ENCODE measurements at regions of chr11 and their contacts with region 1.

Region 1: DNA sequence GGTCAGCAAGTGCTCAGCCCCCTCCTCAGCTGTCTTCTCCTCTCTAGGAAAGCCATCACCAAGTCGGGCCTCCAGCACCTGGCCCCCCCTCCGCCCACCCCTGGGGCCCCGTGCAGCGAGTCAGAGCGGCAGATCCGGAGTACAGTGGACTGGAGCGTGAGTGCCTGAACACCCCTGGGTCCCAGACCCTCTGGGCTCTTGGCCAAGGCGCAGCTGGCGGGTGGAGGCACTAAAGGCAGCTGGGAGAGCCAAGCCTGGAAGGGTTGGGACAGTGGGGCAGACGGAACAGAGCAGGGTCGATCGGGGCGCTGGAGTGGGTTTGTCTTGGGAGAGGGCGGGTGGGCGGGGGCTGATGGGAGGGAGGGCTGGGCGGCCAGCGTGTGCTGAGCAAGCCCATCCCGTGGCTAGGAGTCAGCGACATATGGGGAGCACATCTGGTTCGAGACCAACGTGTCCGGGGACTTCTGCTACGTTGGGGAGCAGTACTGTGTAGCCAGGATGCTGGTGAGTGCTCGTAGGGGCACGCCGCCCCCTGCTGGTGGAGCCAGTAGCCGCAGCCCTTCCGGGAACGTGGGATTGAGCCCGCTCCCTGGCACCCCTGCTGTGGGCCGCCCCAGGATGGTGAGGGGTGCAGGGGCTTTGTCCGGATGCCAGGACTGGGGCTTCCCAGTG is 14.1 kb upstream of the MDK start:
- DNase-seq: no peak
- H3K4me3 ChIP-seq: no peak overlapping the region
- H3K27ac ChIP-seq: no peak overlapping the region
- H3K27me3 ChIP-seq: no peaks in the 10 kb centered on the region
- CTCF ChIP-seq: peak; percentile 77

Region 2: DNA sequence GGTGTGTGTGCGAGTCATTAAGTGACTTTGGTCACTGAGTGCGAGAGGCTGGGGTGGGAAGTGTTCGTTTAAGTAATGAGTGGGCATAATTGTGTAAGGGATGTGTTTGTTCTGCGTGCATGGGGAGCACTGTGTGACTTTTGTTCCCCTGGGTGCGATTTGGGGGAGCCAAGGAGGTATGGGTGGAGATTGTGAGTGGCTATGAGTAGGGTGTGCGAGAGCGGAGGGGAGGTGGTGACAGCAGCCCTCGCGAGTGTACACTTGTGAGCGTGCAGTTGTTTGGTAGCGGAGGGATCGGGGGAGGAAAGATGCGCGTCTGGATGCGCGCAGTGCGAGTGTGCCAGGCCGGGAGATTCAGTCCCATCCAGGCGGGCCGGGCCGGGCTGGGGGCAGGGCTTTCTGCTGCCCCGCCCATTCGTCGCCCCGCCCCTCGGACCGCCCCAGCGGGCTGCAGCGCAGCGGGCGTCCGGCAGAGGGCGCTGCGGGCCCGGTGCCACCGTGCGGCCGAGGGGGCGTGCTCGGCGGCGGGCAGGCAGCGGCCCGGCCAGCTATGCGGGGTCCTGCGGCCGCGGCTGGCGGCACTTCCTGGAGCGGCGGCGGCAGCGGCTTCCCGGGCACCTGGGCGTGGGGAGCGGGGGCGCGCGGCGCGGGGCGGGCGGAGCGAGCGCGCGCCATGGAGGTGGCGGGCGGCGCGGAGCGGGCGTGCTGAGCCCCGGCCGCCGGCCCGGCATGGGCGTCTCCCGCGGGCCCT is 20.3 kb before region 1 on chr11 and contains the start of gene DGKZ:
- CTCF ChIA-PET with region 1: interaction called, 11 read pairs
- POLR2A ChIA-PET with region 1: no interaction called
- DNase-seq: no peak
- H3K4me3 ChIP-seq: peak within 1 kb of the TSS; percentile 90
- H3K27ac ChIP-seq: no peak within 1 kb of the TSS
- H3K27me3 ChIP-seq: no peaks in the 10 kb centered on the region
- CTCF ChIP-seq: peak; percentile 49
- polyA plus RNA-seq, gene DGKZ: 15.8 and 23.2 TPM in 2 replicates

Region 3: GRCh38 chr11:46352063-46352841 is 15.1 kb before region 1 on chr11:
- CTCF ChIA-PET with region 1: interaction called, 26 read pairs
- POLR2A ChIA-PET with region 1: no interaction called
- DNase-seq: no peak
- H3K4me3 ChIP-seq: no peak overlapping the region
- H3K27ac ChIP-seq: no peak overlapping the region
- H3K27me3 ChIP-seq: no peaks in the 10 kb centered on the region
- CTCF ChIP-seq: peak; percentile 83

Region 4: GRCh38 chr11:46471943-46472669 is 104.7 kb after region 1 on chr11:
- CTCF ChIA-PET with region 1: no interaction called
- POLR2A ChIA-PET with region 1: no interaction called
- DNase-seq: no peak
- H3K4me3 ChIP-seq: no peak overlapping the region
- H3K27ac ChIP-seq: no peak overlapping the region
- H3K27me3 ChIP-seq: no peaks in the 10 kb centered on the region
- CTCF ChIP-seq: no peak